Psoas muscle (tissue), 8 donors: ENCODE measurements at regions of chr11 and their contacts with region 1.

Region 1: GRCh38 chr11:106076919-106077608 is at the start of gene KBTBD3:
- DNase-seq: peak; percentile 98 to 99
- ATAC-seq: peak; percentile 95 to 98 (median 97)
- H3K4me3 ChIP-seq: peak within 1 kb of the TSS; percentile 77
- H3K27ac ChIP-seq: peak within 1 kb of the TSS; percentile 98
- H3K4me1 ChIP-seq: peaks cover 40% of the 10 kb centered on the region
- H3K27me3 ChIP-seq: no peaks in the 10 kb centered on the region
- CTCF ChIP-seq: peak; percentile 13
- total RNA-seq, gene KBTBD3: 2.2 to 4.6 (median 3.8) TPM

Region 2: DNA sequence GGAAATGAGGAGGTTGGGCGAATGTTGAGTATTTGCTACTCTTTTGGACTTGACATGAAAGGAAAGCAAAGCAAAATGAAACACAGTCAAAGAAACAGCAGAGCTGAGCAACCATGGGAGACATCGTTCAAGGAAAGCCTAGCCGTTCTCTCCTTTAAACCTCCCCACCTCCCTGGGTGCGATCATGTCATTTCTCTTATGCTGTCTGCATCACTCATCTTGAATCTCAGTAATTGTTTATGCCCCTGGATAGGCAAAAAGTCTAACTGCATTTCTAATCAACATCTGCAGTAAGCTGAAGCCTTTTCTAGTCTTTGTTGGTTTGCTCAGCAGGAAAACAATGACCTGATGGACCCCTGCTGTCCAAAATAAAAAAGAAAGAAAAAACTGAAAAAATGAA is 162.0 kb before region 1 on chr11:
- intact Hi-C with region 1: no loop called
- DNase-seq: no peak
- ATAC-seq: no peak
- H3K4me3 ChIP-seq: no peak overlapping the region
- H3K27ac ChIP-seq: no peak overlapping the region
- H3K4me1 ChIP-seq: no peaks in the 10 kb centered on the region
- H3K27me3 ChIP-seq: no peaks in the 10 kb centered on the region
- CTCF ChIP-seq: no peak

Region 3: GRCh38 chr11:106021967-106022794 is 54.9 kb before region 1 on chr11 and contains the start of gene MSANTD4:
- intact Hi-C with region 1: loop called (anchors 2 kb)
- DNase-seq: peak; percentile 100
- ATAC-seq: peak; percentile 97 to 99 (median 98)
- H3K4me3 ChIP-seq: peak within 1 kb of the TSS; percentile 95
- H3K27ac ChIP-seq: peak within 1 kb of the TSS; percentile 75
- H3K4me1 ChIP-seq: peaks cover 22% of the 10 kb centered on the region
- H3K27me3 ChIP-seq: peaks cover 0 to 2% (median 0%) of the 10 kb centered on the region in 3 donors
- CTCF ChIP-seq: no peak
- total RNA-seq, gene MSANTD4: 9.7 to 31.3 (median 17.1) TPM

Region 4: GRCh38 chr11:106186630-106187029 is 109.6 kb after region 1 on chr11:
- intact Hi-C with region 1: no loop called
- DNase-seq: no peak
- ATAC-seq: no peak
- H3K4me3 ChIP-seq: no peak overlapping the region
- H3K27ac ChIP-seq: no peak overlapping the region
- H3K4me1 ChIP-seq: no peaks in the 10 kb centered on the region
- H3K27me3 ChIP-seq: no peaks in the 10 kb centered on the region
- CTCF ChIP-seq: no peak